ENCODE measurements at regions of chr20 and their contacts with region 1.

Region 1: DNA sequence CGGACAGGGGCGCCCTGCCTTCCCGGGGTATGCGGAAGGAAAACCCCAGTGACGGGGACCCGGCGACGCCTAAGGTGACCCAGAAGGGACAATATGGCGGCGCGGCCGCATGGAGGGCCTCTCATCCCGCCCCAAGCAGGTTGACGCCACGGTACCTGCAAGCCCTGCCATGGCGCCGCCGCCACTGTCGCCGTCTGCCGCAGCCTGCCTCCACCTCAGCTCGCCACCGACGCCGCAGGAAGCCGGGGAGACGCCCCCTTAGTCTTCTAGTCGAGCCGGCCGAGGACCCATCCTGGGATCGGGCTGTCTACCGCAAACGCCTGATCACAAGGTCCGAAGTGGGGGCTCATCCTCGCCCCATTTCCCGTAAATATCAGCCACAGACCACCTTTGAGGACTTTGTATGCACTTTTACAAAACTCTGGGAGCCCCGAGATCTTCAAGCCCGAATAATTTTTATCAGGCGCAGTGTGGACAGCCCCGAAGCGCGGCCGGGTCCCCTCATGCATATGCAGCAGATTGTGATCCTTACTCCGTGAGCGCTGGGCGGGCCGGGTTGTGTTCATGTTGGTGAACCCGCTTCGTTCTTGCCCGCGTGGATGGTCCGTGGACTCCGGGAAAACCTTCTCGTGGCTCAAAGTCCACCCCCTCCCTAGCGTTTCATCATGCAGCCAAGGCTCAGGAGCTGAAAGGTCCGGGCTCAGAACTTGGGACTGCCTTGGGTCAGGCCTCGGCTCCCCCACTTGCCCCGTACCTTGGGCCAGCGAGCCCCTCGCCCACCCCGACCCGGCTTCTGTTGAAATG is at the start of gene BLCAP:
- H3K4me3 Mint-ChIP-seq: peak within 1 kb of the TSS; percentile 93
- H3K27ac Mint-ChIP-seq: peak within 1 kb of the TSS; percentile 98
- H3K4me1 Mint-ChIP-seq: peaks cover 51% of the 10 kb centered on the region
- H3K27me3 Mint-ChIP-seq: peaks cover 8% of the 10 kb centered on the region

Region 2: GRCh38 chr20:37392421-37393178 is 135.2 kb before region 1 on chr20:
- intact Hi-C with region 1: loop called (anchors 5 kb)
- H3K4me3 Mint-ChIP-seq: no peak overlapping the region
- H3K27ac Mint-ChIP-seq: no peak overlapping the region
- H3K4me1 Mint-ChIP-seq: peaks cover 39% of the 10 kb centered on the region
- H3K27me3 Mint-ChIP-seq: no peaks in the 10 kb centered on the region

Region 3: GRCh38 chr20:37463726-37464494 is 63.9 kb before region 1 on chr20:
- intact Hi-C with region 1: no loop called
- H3K4me3 Mint-ChIP-seq: no peak overlapping the region
- H3K27ac Mint-ChIP-seq: no peak overlapping the region
- H3K4me1 Mint-ChIP-seq: no peaks in the 10 kb centered on the region
- H3K27me3 Mint-ChIP-seq: peaks cover 23% of the 10 kb centered on the region

Measured in dendritic cell treated with granulocyte-macrophage colony-stimulating factor and Interleukin-4, amounts not matched to agents 40 ng/mL and 50 ng/mL, for 4 days (primary cell).